ENCODE measurements at regions of chr20 and their contacts with region 1.

Region 1: DNA sequence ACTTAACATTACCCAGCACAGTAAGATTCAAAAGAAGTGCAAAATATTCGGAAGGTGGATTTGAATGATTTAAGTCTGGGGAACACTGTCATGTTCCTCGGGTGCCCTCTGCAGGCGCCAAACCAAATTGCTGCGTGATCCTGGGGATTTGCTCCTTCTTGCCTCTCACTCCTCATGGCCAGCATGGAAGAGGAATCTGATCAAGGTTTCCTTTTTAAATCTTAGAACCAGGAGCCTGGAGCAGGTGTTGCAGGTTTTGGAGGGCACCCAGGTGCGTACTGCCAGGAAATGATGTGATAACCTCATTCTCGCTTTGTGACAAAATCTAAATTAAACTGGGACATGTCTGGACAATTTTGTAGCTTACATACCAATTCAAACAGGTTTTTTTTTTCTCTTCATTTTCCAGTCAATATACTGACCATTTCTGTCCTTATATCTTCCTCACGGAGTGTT is 8.1 kb upstream of the PFDN4 start:
- DNase-seq: peak; percentile 47 to 75 (median 54)
- H3K4me3 ChIP-seq: no peak overlapping the region
- H3K4me3 Mint-ChIP-seq: no peak overlapping the region
- H3K27ac ChIP-seq: no peak overlapping the region
- H3K27ac Mint-ChIP-seq: no peak overlapping the region
- H3K4me1 ChIP-seq: no peaks in the 10 kb centered on the region
- H3K4me1 Mint-ChIP-seq: no peaks in the 10 kb centered on the region
- H3K27me3 ChIP-seq: peaks cover 4% of the 10 kb centered on the region
- H3K27me3 Mint-ChIP-seq: peaks cover 3 to 6% of the 10 kb centered on the region in 2 donors

Region 2: DNA sequence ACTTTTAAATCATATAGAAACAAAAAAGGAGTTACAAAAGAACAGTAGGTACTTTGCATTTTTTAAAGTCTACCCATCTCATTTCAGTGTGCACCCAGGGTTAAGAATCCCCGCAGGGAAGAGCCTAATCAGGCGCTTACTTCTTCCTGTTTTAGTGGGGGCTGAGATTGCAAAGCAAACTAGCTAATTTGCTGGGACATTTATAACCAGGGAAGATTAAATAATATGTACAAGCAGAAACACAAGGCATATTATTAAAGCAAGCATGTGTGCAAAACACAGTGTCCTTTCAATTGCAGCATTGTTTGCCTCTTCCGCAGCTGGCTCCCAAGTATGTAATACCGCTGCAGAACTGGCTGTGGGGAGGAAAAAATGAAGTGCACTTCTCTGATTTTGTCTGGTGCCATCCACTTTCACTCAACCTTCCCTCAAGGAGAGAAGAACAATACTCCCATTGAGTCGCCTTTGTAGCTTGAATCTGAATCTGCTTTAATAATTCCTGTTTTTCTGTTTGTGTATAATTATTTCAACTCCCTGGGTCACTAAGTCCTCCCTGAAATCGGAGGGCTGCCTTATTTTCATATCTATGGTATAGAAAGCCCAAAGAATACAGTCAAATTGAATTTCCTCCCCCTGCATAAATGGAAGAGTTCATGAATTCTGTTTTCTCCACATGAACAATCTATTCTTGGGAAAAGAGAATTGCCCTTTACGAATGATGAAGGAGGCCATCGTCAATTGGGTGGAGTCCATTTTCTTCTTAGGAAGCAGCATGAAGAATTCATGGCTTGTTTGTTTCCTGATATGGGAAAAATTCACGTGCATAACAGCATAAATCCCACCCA is 106.1 kb before region 1 on chr20:
- CTCF ChIA-PET with region 1: interaction called, 23 read pairs
- POLR2A ChIA-PET with region 1: no interaction called
- DNase-seq: no peak
- H3K4me3 ChIP-seq: no peak overlapping the region
- H3K4me3 Mint-ChIP-seq: no peak overlapping the region
- H3K27ac ChIP-seq: no peak overlapping the region
- H3K27ac Mint-ChIP-seq: no peak overlapping the region
- H3K4me1 ChIP-seq: no peaks in the 10 kb centered on the region
- H3K4me1 Mint-ChIP-seq: peaks cover 4 to 9% (median 4%) of the 10 kb centered on the region in 3 donors
- H3K27me3 ChIP-seq: no peaks in the 10 kb centered on the region
- H3K27me3 Mint-ChIP-seq: peaks cover 7 to 15% of the 10 kb centered on the region in 2 donors

Region 3: DNA sequence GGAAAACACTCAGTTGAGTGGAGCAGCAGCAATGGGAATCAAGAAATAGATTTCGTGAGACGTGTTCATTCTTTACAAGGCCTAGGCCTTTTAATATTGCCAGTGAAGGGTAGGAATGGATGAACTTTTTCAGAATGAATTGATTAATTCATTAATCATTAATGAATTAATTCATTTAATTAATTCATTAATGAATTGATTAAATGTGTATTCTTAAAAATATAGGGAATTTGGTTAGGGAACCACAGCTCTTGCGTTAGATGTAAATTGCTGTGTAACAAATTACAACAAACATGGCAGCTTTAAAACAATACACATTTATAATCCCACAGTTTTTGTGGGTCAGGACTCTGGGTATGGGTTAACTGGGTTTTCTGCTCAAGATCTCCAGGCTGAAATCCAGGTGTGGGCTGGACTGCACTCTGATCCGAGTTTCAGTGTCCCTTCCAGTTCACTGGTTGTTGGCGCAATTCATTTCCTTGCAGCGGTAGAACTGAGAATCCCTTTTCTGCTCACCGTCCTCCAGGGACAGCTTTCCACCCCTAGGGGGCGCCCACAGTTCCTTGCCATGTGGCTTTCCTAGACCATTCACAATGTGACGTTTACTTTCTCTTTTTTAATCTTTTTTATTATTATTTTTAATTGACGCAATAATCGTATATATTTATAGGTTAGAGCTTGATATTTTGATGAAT is 96.5 kb before region 1 on chr20:
- CTCF ChIA-PET with region 1: interaction called, 23 read pairs
- POLR2A ChIA-PET with region 1: no interaction called
- DNase-seq: peak; percentile 24 to 77 (median 57)
- H3K4me3 ChIP-seq: no peak overlapping the region
- H3K4me3 Mint-ChIP-seq: no peak overlapping the region
- H3K27ac ChIP-seq: no peak overlapping the region
- H3K27ac Mint-ChIP-seq: no peak overlapping the region
- H3K4me1 ChIP-seq: no peaks in the 10 kb centered on the region
- H3K4me1 Mint-ChIP-seq: peaks cover 1 to 4% (median 3%) of the 10 kb centered on the region in 3 donors
- H3K27me3 ChIP-seq: no peaks in the 10 kb centered on the region
- H3K27me3 Mint-ChIP-seq: peaks cover 4 to 5% of the 10 kb centered on the region in 2 donors

Region 4: GRCh38 chr20:54214566-54214965 is 14.8 kb after region 1 on chr20:
- CTCF ChIA-PET with region 1: interaction called, 25 read pairs
- POLR2A ChIA-PET with region 1: no interaction called
- DNase-seq: no peak
- H3K4me3 ChIP-seq: no peak overlapping the region
- H3K4me3 Mint-ChIP-seq: no peak overlapping the region
- H3K27ac ChIP-seq: no peak overlapping the region
- H3K27ac Mint-ChIP-seq: no peak overlapping the region
- H3K4me1 ChIP-seq: peaks cover 12% of the 10 kb centered on the region
- H3K4me1 Mint-ChIP-seq: peaks cover 22 to 50% (median 48%) of the 10 kb centered on the region in 3 donors
- H3K27me3 ChIP-seq: no peaks in the 10 kb centered on the region
- H3K27me3 Mint-ChIP-seq: peaks cover 0 to 2% of the 10 kb centered on the region in 2 donors